Breast epithelium (tissue), 4 donors: ENCODE measurements at regions of chr11 and their contacts with region 1.

Region 1: DNA sequence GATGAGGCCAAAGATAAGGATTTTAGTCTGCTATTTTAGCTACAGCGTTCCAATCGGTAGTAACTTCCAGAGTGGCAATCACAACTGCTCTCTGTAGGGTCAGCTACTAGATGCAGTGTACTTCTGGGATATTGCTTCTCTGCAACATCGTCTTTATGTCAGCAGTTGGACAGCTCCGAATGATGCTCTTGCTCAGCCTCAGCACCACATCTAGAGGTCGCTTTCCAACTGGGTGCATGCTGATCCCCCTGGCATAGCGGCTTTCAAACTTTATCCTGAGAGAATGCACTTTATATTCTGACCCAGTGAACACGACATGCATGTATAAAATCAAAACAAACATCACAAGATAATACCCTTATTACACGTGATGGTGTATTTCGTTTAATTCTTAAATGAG is 219.6 kb downstream of the C11orf87 start:
- DNase-seq: no peak
- H3K4me3 ChIP-seq: no peak overlapping the region
- H3K27ac ChIP-seq: no peak overlapping the region
- H3K4me1 ChIP-seq: no peaks in the 10 kb centered on the region
- H3K27me3 ChIP-seq: no peaks in the 10 kb centered on the region
- CTCF ChIP-seq: no peak
- POLR2A ChIP-seq: no peak

Region 2: DNA sequence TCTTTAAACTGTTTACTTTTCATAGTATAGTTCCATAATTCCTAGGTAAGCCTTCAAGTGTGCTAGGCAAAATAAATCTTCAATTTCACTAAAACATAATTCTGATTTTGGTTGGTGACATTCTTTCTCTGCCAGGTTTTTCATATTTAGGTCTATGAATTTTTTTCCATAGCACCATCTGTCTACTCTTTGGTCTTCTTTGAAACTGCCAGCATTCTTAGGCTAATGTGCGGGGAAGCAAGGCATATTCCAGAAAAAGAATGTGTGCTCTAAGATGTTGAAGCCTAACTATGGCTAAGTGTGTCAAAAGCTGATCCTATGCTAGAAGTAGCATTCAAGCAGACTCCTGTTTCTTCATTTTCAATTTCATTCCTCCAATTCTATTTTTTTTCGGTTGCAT is 433.4 kb before region 1 on chr11:
- intact Hi-C with region 1: loop called (anchors 5 kb)
- DNase-seq: no peak
- H3K4me3 ChIP-seq: no peak overlapping the region
- H3K27ac ChIP-seq: no peak overlapping the region
- H3K4me1 ChIP-seq: no peaks in the 10 kb centered on the region
- H3K27me3 ChIP-seq: no peaks in the 10 kb centered on the region
- CTCF ChIP-seq: no peak
- POLR2A ChIP-seq: no peak

Region 3: GRCh38 chr11:110318638-110319404 is 677.3 kb after region 1 on chr11:
- intact Hi-C with region 1: no loop called
- DNase-seq: no peak
- H3K4me3 ChIP-seq: no peak overlapping the region
- H3K27ac ChIP-seq: no peak overlapping the region
- H3K4me1 ChIP-seq: no peaks in the 10 kb centered on the region
- H3K27me3 ChIP-seq: no peaks in the 10 kb centered on the region
- CTCF ChIP-seq: no peak
- POLR2A ChIP-seq: no peak